Ovary (tissue), 10 donors: ENCODE measurements at regions of chr17 and their contacts with region 1.

Region 1: DNA sequence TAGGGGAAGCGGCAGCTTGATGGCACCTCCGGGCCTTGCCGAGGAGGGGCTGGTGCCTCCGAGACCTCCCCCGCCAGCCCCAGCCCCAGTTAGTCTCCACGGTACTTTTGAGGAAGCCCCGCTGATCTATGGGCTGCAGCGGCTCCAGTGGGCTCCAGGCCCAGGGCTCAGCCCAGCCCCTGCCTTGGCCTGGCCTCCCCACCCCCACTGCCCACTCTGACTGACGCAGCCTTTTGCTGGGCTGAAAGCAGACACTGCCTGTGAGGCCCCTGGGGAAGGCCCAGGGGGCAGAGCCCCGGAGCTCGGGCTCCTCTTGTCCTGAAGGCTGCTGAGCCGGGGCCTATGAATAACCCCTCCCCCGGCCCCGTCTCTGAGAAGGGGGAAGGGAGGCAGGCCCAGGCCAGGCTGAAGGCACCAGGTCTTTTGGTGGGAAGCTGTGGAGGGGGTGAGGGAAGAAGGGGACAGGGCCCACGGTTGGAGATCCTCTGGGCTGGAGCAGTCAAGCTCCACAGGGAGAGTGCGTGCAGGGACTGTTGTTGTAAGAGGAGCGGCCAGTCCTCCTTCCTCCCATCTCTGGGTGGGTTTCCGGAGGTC is 7.5 kb upstream of the SMTNL2 start:
- DNase-seq: peak in 1 of 5 donors; percentile 11
- H3K4me3 ChIP-seq: no peak overlapping the region
- H3K27ac ChIP-seq: no peak overlapping the region
- H3K4me1 ChIP-seq: no peaks in the 10 kb centered on the region
- H3K27me3 ChIP-seq: no peaks in the 10 kb centered on the region
- CTCF ChIP-seq: no peak
- EP300 ChIP-seq: no peak
- POLR2A ChIP-seq: no peak

Region 2: GRCh38 chr17:4476511-4477070 is 100.2 kb before region 1 on chr17:
- intact Hi-C with region 1: no loop called
- DNase-seq: no peak
- H3K4me3 ChIP-seq: no peak overlapping the region
- H3K27ac ChIP-seq: no peak overlapping the region
- H3K4me1 ChIP-seq: no peaks in the 10 kb centered on the region
- H3K27me3 ChIP-seq: no peaks in the 10 kb centered on the region
- CTCF ChIP-seq: no peak
- EP300 ChIP-seq: no peak
- POLR2A ChIP-seq: no peak

Region 3: GRCh38 chr17:4530799-4531730 is 45.8 kb before region 1 on chr17:
- intact Hi-C with region 1: no loop called
- DNase-seq: no peak
- H3K4me3 ChIP-seq: no peak overlapping the region
- H3K27ac ChIP-seq: no peak overlapping the region
- H3K4me1 ChIP-seq: peaks cover 1% of the 10 kb centered on the region
- H3K27me3 ChIP-seq: no peaks in the 10 kb centered on the region
- CTCF ChIP-seq: no peak
- EP300 ChIP-seq: no peak
- POLR2A ChIP-seq: no peak

Region 4: DNA sequence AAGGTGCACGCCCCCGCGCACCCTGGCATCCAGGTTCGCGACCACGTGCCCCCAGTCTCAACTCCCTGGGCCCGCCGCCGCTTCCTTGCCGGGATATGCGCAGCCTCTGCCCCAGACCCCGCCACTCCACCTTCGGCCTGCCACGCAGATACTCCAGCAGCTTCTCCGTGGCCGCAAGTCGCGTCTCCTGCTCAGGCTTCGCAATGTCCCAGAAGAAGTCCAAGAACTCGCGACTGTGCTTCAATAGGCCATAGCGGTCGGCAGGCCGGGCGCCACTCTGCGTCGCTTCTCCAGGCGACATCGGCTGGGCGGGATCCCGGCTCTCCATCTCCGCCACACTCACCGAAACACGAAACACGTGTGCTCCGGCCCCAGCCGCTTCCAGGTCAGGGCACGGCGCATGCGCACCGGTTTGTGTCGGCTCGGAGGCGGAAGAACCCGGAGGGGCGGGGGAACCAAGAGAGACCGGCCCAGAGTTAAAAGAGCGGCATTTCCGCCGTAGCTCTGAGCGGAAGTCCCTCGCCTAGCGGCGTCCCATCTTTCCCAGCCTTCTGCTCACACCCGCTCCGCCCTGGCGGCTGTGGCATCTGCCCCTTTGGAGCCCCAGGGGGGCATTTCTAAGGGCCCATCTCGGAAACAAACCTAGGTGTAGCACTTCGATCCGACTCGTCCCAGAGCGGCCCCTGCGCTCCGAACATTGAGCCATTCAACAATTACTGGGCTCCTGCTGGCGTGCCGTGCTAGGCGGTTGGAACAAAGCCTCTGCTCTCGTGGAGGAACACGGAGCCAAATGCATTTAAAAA is 21.6 kb before region 1 on chr17 and contains the start of gene MYBBP1A:
- intact Hi-C with region 1: no loop called
- DNase-seq: peak; percentile 95 to 98 (median 97)
- H3K4me3 ChIP-seq: peak within 1 kb of the TSS; percentile 66
- H3K27ac ChIP-seq: peak within 1 kb of the TSS; percentile 42 to 44
- H3K4me1 ChIP-seq: peaks cover 9% of the 10 kb centered on the region
- H3K27me3 ChIP-seq: no peaks in the 10 kb centered on the region
- CTCF ChIP-seq: no peak
- EP300 ChIP-seq: no peak
- POLR2A ChIP-seq: no peak
- total RNA-seq, gene MYBBP1A: 18.5 to 71.4 (median 46.4) TPM

Region 5: GRCh38 chr17:4610162-4610561 is 33.3 kb after region 1 on chr17:
- intact Hi-C with region 1: loop called in 1 of 4 experiments (anchors 5 kb)
- DNase-seq: no peak
- H3K4me3 ChIP-seq: no peak overlapping the region
- H3K27ac ChIP-seq: no peak overlapping the region
- H3K4me1 ChIP-seq: peaks cover 11% of the 10 kb centered on the region
- H3K27me3 ChIP-seq: no peaks in the 10 kb centered on the region
- CTCF ChIP-seq: no peak
- EP300 ChIP-seq: no peak
- POLR2A ChIP-seq: no peak